ENCODE measurements at regions of chr14 and their contacts with region 1.

Region 1: DNA sequence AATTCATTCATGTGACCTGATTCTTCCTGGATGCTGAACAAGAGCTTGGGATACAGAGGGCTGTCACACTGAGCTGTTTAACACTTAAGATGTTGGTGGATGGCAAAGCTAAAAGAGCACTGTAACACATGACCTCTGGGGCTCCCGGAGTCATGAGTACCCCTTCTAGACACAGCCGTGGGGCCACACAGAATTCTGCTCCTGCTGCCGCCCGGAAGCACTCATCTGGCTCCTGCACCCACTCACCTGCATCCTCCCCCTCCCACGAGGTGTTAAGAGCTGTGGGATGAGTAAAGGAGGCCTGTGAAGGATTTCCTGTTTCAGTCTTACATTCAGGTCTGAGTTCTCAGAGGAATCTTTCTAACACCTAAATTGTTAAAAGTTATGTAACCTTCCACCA is 78.0 kb upstream of the SSTR1 start:
- DNase-seq: peak; percentile 71
- H3K4me3 Mint-ChIP-seq: no peak overlapping the region
- H3K27ac Mint-ChIP-seq: no peak overlapping the region
- H3K4me1 Mint-ChIP-seq: peaks cover 28% of the 10 kb centered on the region
- H3K27me3 Mint-ChIP-seq: no peaks in the 10 kb centered on the region

Region 2: DNA sequence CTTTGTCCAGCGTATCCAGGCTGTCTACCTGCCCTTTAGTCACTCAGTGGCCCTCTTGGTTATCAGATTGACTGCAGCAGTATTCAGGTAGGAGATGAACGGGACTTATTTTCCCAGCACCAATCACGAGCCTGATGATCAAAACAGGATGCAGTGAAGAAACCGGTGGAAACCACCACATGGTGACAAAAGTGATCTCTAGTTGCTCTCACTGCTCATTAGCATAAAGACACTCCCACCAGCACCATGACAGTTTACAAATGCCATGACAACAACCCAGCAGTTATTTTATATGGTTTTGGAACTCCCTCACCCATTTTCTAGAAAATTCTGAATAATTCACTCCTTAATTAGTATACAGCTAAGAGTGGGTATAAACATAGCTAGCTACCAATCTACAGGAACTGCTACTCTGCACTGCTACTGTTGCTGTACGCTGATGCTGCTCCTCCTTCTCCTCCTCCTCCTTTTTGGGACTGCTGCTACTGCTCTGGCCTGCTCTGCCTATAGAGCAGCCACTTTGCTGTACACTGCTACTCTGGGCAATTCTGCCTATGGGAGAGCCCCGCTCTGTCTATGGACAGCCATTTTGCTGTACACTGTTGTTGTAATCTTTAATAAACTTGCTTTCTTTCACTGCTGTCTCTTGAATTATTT is 64.5 kb before region 1 on chr14:
- CTCF ChIA-PET with region 1: no interaction called
- POLR2A ChIA-PET with region 1: no interaction called
- intact Hi-C with region 1: loop called (anchors 2 kb)
- DNase-seq: peak; percentile 77
- H3K4me3 Mint-ChIP-seq: peak overlapping the region; percentile 57
- H3K27ac Mint-ChIP-seq: peak overlapping the region; percentile 80
- H3K4me1 Mint-ChIP-seq: peaks cover 33% of the 10 kb centered on the region
- H3K27me3 Mint-ChIP-seq: no peaks in the 10 kb centered on the region

Region 3: DNA sequence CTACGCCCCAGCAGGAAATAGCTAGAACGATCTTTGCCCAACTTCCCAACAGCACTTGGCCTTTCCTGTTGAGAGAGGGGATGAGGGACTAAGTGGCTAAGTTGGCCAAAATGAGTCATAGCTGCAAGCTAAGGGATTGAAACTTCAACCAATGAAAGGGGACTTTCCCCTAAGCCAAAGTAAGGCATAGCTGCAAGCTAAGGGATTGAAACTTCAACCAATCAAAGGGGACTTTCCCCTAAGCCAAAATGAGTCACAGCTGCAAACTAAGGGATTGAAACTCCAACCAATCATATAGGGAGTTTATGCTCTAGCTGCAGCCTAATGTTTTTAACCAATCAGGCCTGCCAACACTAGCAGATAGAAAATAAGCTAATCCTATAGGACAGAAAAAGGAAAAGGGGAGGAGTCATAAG is 22.5 kb before region 1 on chr14:
- CTCF ChIA-PET with region 1: no interaction called
- POLR2A ChIA-PET with region 1: interaction called, 3 read pairs
- intact Hi-C with region 1: loop called (anchors 1 kb)
- DNase-seq: no peak
- H3K4me3 Mint-ChIP-seq: no peak overlapping the region
- H3K27ac Mint-ChIP-seq: no peak overlapping the region
- H3K4me1 Mint-ChIP-seq: peaks cover 14% of the 10 kb centered on the region
- H3K27me3 Mint-ChIP-seq: no peaks in the 10 kb centered on the region

Region 4: GRCh38 chr14:38168416-38168815 is 38.7 kb after region 1 on chr14:
- CTCF ChIA-PET with region 1: no interaction called
- POLR2A ChIA-PET with region 1: no interaction called
- intact Hi-C with region 1: loop called (anchors 5 kb)
- DNase-seq: no peak
- H3K4me3 Mint-ChIP-seq: no peak overlapping the region
- H3K27ac Mint-ChIP-seq: no peak overlapping the region
- H3K4me1 Mint-ChIP-seq: no peaks in the 10 kb centered on the region
- H3K27me3 Mint-ChIP-seq: peaks cover 4% of the 10 kb centered on the region

Region 5: GRCh38 chr14:38505221-38505972 is 375.7 kb after region 1 on chr14:
- CTCF ChIA-PET with region 1: no interaction called
- POLR2A ChIA-PET with region 1: no interaction called
- intact Hi-C with region 1: no loop called
- DNase-seq: no peak
- H3K4me3 Mint-ChIP-seq: no peak overlapping the region
- H3K27ac Mint-ChIP-seq: no peak overlapping the region
- H3K4me1 Mint-ChIP-seq: no peaks in the 10 kb centered on the region
- H3K27me3 Mint-ChIP-seq: peaks cover 1% of the 10 kb centered on the region

Measured in activated CD4-positive, alpha-beta memory T cell treated with anti-CD3 and anti-CD28 coated beads for 36 hours (primary cell).